HepG2 (cell line): ENCODE measurements at regions of chr7 and their contacts with region 1.

Region 1: DNA sequence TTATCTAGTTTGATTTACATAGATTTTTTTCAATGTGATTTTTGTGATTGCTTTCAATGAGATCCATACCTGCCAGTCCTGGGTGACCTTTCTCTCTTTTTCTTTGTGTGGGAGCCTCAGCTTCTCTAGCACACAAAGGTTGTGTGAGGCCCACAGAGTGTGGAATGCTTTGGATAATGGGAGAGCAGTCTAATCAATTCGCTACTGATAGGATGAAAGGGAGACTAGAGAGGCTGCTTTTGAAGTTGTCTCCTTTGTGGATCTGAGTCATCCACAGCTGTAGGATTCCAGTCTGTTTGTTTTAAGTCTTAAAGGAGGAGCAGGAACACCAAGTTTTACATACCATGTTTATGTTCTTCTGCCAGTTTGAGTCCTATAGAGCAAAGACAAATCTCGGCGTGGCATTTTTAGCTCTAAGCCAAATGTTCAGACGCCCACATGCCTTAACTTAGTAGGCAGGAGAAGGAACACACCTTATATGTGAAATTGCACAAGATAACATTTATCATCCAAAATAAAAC is 330.0 kb downstream of the ARL4A start:
- DNase-seq: peak; percentile 100
- ATAC-seq: peak; percentile 99
- H3K4me3 ChIP-seq: peak overlapping the region; percentile 3 to 48 (median 27); a peak in 3 of 6 replicates
- H3K27ac ChIP-seq: peak overlapping the region; percentile 97
- H3K4me1 ChIP-seq: peaks cover 65% of the 10 kb centered on the region
- H3K27me3 ChIP-seq: no peaks in the 10 kb centered on the region
- CTCF ChIP-seq: no peak
- EP300 ChIP-seq: peak; percentile 95 to 99
- POLR2A ChIP-seq: peak in 1 of 2 experiments; percentile 19; a peak in 1 of 4 replicates
- RAD21 ChIP-seq: peak; percentile 32; the same call in 1 of the 2 replicates

Region 2: DNA sequence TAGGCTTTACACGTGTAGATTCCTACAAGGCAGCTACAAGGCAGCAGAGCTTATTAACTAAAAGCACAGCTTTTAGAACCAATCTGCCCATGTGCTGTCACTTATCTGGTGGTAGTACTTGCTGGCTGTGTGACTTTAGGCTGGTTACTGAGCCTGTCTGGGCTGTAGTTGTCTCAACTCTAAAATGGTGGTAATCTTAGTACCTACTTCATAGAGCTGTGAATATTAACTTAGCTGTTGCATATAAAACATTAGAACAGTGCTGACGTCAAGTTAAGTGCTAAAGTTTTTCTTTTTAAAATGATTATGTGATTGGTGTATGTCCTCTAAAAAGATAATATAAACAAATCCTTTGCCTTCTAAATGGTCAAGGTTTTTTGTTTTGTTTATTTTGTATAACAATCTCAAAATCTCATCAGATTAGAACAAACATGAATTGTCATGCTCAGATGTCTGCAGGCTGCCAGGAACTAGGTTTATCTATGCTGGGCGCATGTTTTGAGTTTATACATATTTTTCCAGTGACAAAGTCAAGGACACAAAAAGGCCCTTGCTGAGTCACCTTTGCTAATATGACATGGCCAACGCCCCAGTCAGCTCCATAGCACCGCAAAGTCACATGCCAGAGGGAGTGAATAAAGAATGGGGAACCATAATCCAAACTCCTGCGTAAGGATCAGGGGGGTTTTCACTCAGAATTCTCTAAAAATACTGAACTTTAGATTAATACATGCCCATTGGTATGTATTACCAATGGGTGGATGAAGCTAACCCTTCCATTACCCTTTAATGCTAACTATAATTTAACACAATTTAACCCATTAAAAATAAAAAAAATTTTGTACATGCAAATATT is 369.8 kb before region 1 on chr7:
- CTCF ChIA-PET with region 1: no interaction called
- POLR2A ChIA-PET with region 1: interaction called, 7 read pairs
- in situ Hi-C with region 1: loop called (anchors 5 kb)
- intact Hi-C with region 1: no loop called
- DNase-seq: peak; percentile 92
- ATAC-seq: peak; percentile 87
- H3K4me3 ChIP-seq: no peak overlapping the region
- H3K27ac ChIP-seq: peak overlapping the region; percentile 59
- H3K4me1 ChIP-seq: peaks cover 49% of the 10 kb centered on the region
- H3K27me3 ChIP-seq: no peaks in the 10 kb centered on the region
- CTCF ChIP-seq: no peak
- EP300 ChIP-seq: peak in 1 of 2 experiments; percentile 84; a peak in 1 of 4 replicates
- POLR2A ChIP-seq: no peak
- RAD21 ChIP-seq: no peak

Region 3: DNA sequence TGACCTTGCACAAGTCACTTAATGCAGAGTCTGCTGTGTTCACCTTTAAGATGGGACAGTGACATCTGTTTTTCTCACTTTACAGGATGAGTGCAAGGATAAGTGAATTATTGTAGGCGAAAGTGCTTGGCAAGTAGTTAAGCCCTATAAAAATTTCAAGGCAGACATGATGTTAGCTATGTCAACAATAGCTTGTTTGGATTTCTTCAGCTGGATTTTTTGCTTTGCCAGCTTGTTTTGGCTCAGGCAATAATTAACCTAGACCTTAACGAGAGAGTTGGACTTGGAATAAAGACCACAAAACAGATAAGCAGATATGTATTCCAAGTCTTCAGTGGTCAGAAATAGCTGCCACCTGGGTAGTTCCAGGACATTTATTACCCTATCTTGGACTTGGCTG is 74.8 kb before region 1 on chr7:
- CTCF ChIA-PET with region 1: no interaction called
- POLR2A ChIA-PET with region 1: interaction called, 15 read pairs
- in situ Hi-C with region 1: loop called (anchors 10 kb)
- intact Hi-C with region 1: loop called (anchors 1 kb)
- DNase-seq: peak; percentile 92
- ATAC-seq: peak; percentile 97
- H3K4me3 ChIP-seq: peak overlapping the region; percentile 1 to 40 (median 19); a peak in 2 of 6 replicates
- H3K27ac ChIP-seq: peak overlapping the region; percentile 71
- H3K4me1 ChIP-seq: peaks cover 52% of the 10 kb centered on the region
- H3K27me3 ChIP-seq: no peaks in the 10 kb centered on the region
- CTCF ChIP-seq: no peak
- EP300 ChIP-seq: peak in 1 of 2 experiments; percentile 92; a peak in 2 of 4 replicates
- POLR2A ChIP-seq: no peak
- RAD21 ChIP-seq: no peak

Region 4: GRCh38 chr7:12961910-12962480 is 55.4 kb before region 1 on chr7:
- CTCF ChIA-PET with region 1: no interaction called
- POLR2A ChIA-PET with region 1: no interaction called
- in situ Hi-C with region 1: no loop called
- intact Hi-C with region 1: no loop called
- DNase-seq: no peak
- ATAC-seq: no peak
- H3K4me3 ChIP-seq: no peak overlapping the region
- H3K27ac ChIP-seq: no peak overlapping the region
- H3K4me1 ChIP-seq: 0 out of 2 replicates have a peak, but pooled peaks cover 4% of the 10 kb centered on the region
- H3K27me3 ChIP-seq: no peaks in the 10 kb centered on the region
- CTCF ChIP-seq: no peak
- EP300 ChIP-seq: no peak
- POLR2A ChIP-seq: no peak
- RAD21 ChIP-seq: no peak

Region 5: GRCh38 chr7:12993025-12993424 is 24.4 kb before region 1 on chr7:
- CTCF ChIA-PET with region 1: no interaction called
- POLR2A ChIA-PET with region 1: no interaction called
- in situ Hi-C with region 1: no loop called
- intact Hi-C with region 1: no loop called
- DNase-seq: no peak
- ATAC-seq: no peak
- H3K4me3 ChIP-seq: no peak overlapping the region
- H3K27ac ChIP-seq: no peak overlapping the region
- H3K4me1 ChIP-seq: no peaks in the 10 kb centered on the region
- H3K27me3 ChIP-seq: no peaks in the 10 kb centered on the region
- CTCF ChIP-seq: no peak
- EP300 ChIP-seq: no peak
- POLR2A ChIP-seq: no peak
- RAD21 ChIP-seq: no peak

Region 6: DNA sequence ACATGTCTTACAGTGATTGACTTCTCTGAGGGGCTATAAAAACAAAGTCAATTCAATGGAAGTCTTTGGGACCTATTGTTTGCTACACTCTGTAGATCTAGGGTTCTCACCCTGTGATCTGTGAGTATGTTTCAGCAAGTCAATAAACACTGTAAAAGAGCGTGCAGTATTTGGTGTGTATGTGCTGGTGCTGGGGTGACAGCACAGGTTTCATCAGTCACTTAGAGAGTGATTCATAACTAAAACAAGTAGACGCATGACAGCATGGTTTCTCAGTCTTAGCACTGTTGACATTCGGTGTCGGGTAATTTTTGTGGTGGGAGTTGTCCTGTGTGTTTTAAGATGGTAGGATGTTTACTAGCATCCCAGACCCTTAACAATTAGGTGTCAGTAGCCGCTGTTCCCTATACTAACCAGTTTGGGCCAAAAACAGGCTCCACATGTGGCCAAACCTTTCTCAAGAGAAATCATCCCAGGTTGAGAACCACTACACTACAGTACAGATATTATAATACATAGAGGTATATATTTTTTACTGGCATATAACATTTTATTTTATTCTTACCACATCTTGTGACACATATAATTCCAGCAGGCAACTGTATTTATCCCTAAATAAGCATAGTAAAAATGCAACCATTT is 81.9 kb after region 1 on chr7:
- CTCF ChIA-PET with region 1: no interaction called
- POLR2A ChIA-PET with region 1: interaction called, 10 read pairs
- in situ Hi-C with region 1: no loop called
- intact Hi-C with region 1: loop called (anchors 5 kb)
- DNase-seq: peak; percentile 53
- ATAC-seq: peak; percentile 82
- H3K4me3 ChIP-seq: no peak overlapping the region
- H3K27ac ChIP-seq: no peak overlapping the region
- H3K4me1 ChIP-seq: peaks cover 7% of the 10 kb centered on the region
- H3K27me3 ChIP-seq: no peaks in the 10 kb centered on the region
- CTCF ChIP-seq: no peak
- EP300 ChIP-seq: peak in 1 of 2 experiments; percentile 38; a peak in 1 of 4 replicates
- POLR2A ChIP-seq: no peak
- RAD21 ChIP-seq: no peak

Region 7: GRCh38 chr7:13117103-13117502 is 99.7 kb after region 1 on chr7:
- CTCF ChIA-PET with region 1: no interaction called
- POLR2A ChIA-PET with region 1: interaction called, 5 read pairs
- in situ Hi-C with region 1: no loop called
- intact Hi-C with region 1: loop called (anchors 2 kb)
- DNase-seq: peak; percentile 35
- ATAC-seq: peak; percentile 69
- H3K4me3 ChIP-seq: no peak overlapping the region
- H3K27ac ChIP-seq: no peak overlapping the region
- H3K4me1 ChIP-seq: peaks cover 10% of the 10 kb centered on the region; the same call in 1 of the 2 replicates
- H3K27me3 ChIP-seq: no peaks in the 10 kb centered on the region
- CTCF ChIP-seq: peak; percentile 70
- EP300 ChIP-seq: no peak
- POLR2A ChIP-seq: no peak
- RAD21 ChIP-seq: peak; percentile 65; the same call in 1 of the 2 replicates

Region 8: DNA sequence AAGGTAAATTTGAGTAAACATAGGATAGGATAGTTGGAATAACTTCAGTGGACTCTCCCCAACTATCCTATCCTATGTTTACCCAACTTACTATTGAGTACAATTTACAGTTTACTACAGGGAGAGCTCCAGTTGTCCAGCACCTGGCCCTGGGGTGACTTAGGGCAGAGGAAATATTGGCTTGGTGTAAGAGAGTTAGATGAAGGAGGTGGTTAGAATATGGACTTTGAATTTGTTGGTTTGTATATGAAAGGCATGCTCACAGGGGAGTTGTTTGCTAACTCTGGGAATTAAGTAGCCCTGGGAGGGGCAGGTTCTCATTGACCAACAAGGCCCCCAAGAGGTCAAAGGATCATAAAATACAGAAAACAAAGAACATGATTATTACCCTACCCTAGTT is 167.7 kb after region 1 on chr7:
- CTCF ChIA-PET with region 1: no interaction called
- POLR2A ChIA-PET with region 1: interaction called, 6 read pairs
- in situ Hi-C with region 1: no loop called
- intact Hi-C with region 1: loop called (anchors 1 kb)
- DNase-seq: peak; percentile 95
- ATAC-seq: peak; percentile 99
- H3K4me3 ChIP-seq: no peak overlapping the region; a peak in 1 of 6 replicates
- H3K27ac ChIP-seq: peak overlapping the region; percentile 62
- H3K4me1 ChIP-seq: peaks cover 32% of the 10 kb centered on the region
- H3K27me3 ChIP-seq: no peaks in the 10 kb centered on the region
- CTCF ChIP-seq: peak; percentile 20; the same call in 1 of the 2 replicates
- EP300 ChIP-seq: peak in 1 of 2 experiments; percentile 97; a peak in 2 of 4 replicates
- POLR2A ChIP-seq: no peak
- RAD21 ChIP-seq: no peak